SK-N-SH (cell line): ENCODE measurements at regions of chr1 and their contacts with region 1.

Region 1: GRCh38 chr1:33610864-33611455 is 138.5 kb downstream of the ZSCAN20 start:
- DNase-seq: no peak
- H3K4me3 ChIP-seq: no peak overlapping the region
- H3K27ac ChIP-seq: no peak overlapping the region
- H3K4me1 ChIP-seq: peaks cover 0 to 10% of the 10 kb centered on the region in 2 experiments; a peak in 1 of 4 replicates
- H3K27me3 ChIP-seq: no peaks in the 10 kb centered on the region; the same call in 1 of the 2 replicates
- CTCF ChIP-seq: no peak
- EP300 ChIP-seq: no peak
- RAD21 ChIP-seq: no peak

Region 2: GRCh38 chr1:33244143-33244820 is 366.7 kb before region 1 on chr1:
- CTCF ChIA-PET with region 1: no interaction called
- POLR2A ChIA-PET with region 1: no interaction called
- DNase-seq: no peak
- H3K4me3 ChIP-seq: no peak overlapping the region
- H3K27ac ChIP-seq: no peak overlapping the region
- H3K4me1 ChIP-seq: peaks cover 0 to 5% of the 10 kb centered on the region in 2 experiments; a peak in 1 of 4 replicates
- H3K27me3 ChIP-seq: no peaks in the 10 kb centered on the region; the same call in 1 of the 2 replicates
- CTCF ChIP-seq: no peak
- EP300 ChIP-seq: no peak
- RAD21 ChIP-seq: no peak

Region 3: DNA sequence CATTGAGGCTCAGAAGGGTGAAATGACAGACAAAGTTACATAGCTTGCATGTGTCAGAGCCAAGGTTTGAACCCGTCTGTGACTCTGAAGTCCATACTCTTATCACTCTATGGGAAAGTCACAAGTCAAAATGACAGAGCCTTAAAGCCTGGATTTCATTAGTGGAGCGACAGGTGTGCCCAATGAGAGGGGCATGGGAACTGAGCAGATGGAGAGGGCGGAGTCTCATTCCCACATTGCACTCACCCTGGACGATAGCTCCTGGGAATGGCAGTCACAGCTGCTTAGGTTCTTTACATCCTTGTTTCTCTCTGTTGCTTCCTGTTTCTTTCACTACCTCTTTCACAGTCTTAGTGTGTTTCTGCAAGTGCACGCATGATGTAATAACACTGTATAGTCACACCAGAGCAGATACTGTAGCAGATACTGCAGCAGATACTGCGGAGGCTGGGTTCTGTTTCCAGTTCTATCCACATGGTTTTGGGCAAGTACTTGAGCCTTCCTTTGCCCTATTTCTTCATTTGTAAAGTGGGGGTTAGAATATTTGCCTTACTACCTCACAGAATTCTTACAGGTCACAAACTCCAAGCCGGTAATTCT is 11.3 kb before region 1 on chr1:
- CTCF ChIA-PET with region 1: interaction called, 41 read pairs
- POLR2A ChIA-PET with region 1: no interaction called
- DNase-seq: no peak
- H3K4me3 ChIP-seq: no peak overlapping the region
- H3K27ac ChIP-seq: no peak overlapping the region
- H3K4me1 ChIP-seq: no peaks in the 10 kb centered on the region; a peak in 1 of 4 replicates
- H3K27me3 ChIP-seq: no peaks in the 10 kb centered on the region
- CTCF ChIP-seq: no peak
- EP300 ChIP-seq: no peak
- RAD21 ChIP-seq: no peak

Region 4: GRCh38 chr1:33680281-33680840 is 69.4 kb after region 1 on chr1:
- CTCF ChIA-PET with region 1: no interaction called
- POLR2A ChIA-PET with region 1: no interaction called
- DNase-seq: no peak
- H3K4me3 ChIP-seq: no peak overlapping the region
- H3K27ac ChIP-seq: no peak overlapping the region
- H3K4me1 ChIP-seq: peaks cover 0 to 13% of the 10 kb centered on the region in 2 experiments; a peak in 2 of 4 replicates
- H3K27me3 ChIP-seq: no peaks in the 10 kb centered on the region
- CTCF ChIP-seq: no peak
- EP300 ChIP-seq: no peak
- RAD21 ChIP-seq: no peak